HCT116 (cell line): ENCODE measurements at regions of chr1 and their contacts with region 1.

Region 1: DNA sequence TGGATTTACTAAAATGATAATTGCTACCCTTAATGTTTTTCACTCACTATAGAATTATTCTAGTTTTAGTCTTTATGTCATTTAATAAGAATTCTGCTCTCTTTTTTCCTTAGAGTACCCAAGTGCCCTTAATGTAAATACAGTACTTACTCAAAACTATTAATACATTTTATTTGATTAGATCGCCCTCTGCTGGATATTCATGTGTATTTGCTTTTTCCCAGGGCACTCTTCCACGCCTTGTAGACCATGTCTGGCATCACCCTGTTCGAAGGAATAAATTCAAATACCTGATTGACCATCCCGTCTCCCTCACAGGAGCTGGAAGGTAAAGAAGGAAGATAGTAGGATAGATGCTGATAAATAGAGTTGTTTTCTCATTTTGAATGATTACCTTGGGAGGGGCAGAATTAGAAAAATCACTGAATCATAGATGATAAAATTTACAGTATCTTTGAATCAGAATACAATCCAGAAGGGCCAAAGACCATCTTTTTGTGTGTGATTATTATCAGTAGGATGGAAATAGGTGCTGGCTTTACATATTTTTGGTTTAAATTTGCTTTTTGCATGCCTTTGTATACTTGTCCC is 4.1 kb downstream of the AXDND1 start:
- DNase-seq: peak; percentile 57
- ATAC-seq: peak; percentile 67
- H3K4me3 ChIP-seq: no peak overlapping the region
- H3K27ac ChIP-seq: no peak overlapping the region
- H3K4me1 ChIP-seq: peaks cover 0 to 13% of the 10 kb centered on the region in 2 experiments; a peak in 2 of 4 replicates
- H3K27me3 ChIP-seq: no peaks in the 10 kb centered on the region
- CTCF ChIP-seq: peak; percentile 39 to 82 (median 77); a peak in 4 of 6 replicates
- POLR2A ChIP-seq: no peak
- RAD21 ChIP-seq: peak; percentile 87

Region 2: GRCh38 chr1:178542560-178543356 is 827.1 kb before region 1 on chr1:
- CTCF ChIA-PET with region 1: no interaction called
- POLR2A ChIA-PET with region 1: no interaction called
- RAD21 ChIA-PET with region 1: no interaction called
- intact Hi-C with region 1: loop called (anchors 2 kb)
- DNase-seq: peak; percentile 43
- ATAC-seq: peak; percentile 88
- H3K4me3 ChIP-seq: peak overlapping the region; percentile 61 to 69
- H3K27ac ChIP-seq: peak overlapping the region; percentile 64
- H3K4me1 ChIP-seq: peaks cover 17 to 33% of the 10 kb centered on the region in 2 experiments
- H3K27me3 ChIP-seq: no peaks in the 10 kb centered on the region
- CTCF ChIP-seq: peak; percentile 84 to 98 (median 88)
- POLR2A ChIP-seq: no peak
- RAD21 ChIP-seq: peak; percentile 85

Region 3: DNA sequence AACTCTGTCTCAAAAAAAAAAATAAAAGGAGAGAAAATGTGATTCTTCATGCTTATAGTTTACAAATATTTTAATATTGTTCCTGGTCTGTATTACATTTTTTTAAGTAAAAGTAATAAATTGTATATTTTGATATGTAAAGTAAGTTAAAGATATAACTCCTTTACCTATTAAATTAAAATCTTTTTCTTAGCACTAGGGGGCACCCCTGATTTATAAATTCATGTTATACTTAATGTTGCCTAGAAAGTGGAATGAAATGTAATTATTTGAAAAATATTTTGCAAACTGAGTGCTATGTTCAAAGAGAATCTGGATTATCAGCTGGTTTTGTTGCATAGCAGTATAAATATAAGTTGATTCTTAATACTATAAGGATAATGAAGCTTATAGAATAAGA is 595.6 kb before region 1 on chr1:
- CTCF ChIA-PET with region 1: no interaction called
- POLR2A ChIA-PET with region 1: no interaction called
- RAD21 ChIA-PET with region 1: no interaction called
- intact Hi-C with region 1: loop called (anchors 2 kb)
- DNase-seq: no peak
- ATAC-seq: no peak
- H3K4me3 ChIP-seq: no peak overlapping the region
- H3K27ac ChIP-seq: no peak overlapping the region
- H3K4me1 ChIP-seq: no peaks in the 10 kb centered on the region
- H3K27me3 ChIP-seq: no peaks in the 10 kb centered on the region
- CTCF ChIP-seq: peak; percentile 7 to 62 (median 47); a peak in 3 of 6 replicates
- POLR2A ChIP-seq: no peak
- RAD21 ChIP-seq: peak; percentile 73

Region 4: DNA sequence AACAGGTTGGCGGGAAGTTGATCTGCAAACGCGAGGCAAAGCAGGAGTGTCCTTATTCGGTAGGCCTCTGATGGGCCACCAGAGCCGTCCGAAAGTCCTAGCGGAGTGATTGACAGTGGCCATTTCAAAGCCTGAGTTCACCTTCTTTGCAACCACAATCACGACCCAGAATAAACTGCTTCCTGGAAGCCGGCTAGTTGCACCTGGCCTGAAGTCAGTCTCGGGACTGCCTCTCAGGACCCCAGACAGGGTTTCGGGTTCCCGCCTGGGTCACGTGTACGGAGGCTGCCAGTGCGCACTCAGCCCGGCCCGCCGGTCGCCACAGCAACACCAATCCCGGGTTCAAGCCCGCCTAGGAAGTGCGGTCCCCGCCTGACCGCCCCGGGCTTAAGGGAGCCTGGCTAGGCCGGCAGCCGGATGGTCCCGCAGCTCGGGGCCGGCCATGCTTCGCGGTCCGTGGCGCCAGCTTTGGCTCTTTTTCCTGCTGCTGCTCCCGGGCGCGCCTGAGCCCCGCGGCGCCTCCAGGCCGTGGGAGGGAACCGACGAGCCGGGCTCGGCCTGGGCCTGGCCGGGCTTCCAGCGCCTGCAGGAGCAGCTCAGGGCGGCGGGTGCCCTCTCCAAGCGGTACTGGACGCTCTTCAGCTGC is 288.0 kb before region 1 on chr1 and contains the start of gene TOR3A:
- CTCF ChIA-PET with region 1: interaction called, 3 read pairs
- POLR2A ChIA-PET with region 1: no interaction called
- RAD21 ChIA-PET with region 1: no interaction called
- intact Hi-C with region 1: loop called (anchors 1 kb)
- DNase-seq: peak; percentile 68
- ATAC-seq: peak; percentile 92
- H3K4me3 ChIP-seq: peak within 1 kb of the TSS; percentile 73 to 82
- H3K27ac ChIP-seq: peak within 1 kb of the TSS; percentile 74
- H3K4me1 ChIP-seq: peaks cover 0 to 23% of the 10 kb centered on the region in 2 experiments; a peak in 3 of 4 replicates
- H3K27me3 ChIP-seq: no peaks in the 10 kb centered on the region
- CTCF ChIP-seq: no peak
- POLR2A ChIP-seq: no peak
- RAD21 ChIP-seq: no peak
- total RNA-seq, gene TOR3A: 27.0 TPM

Region 5: GRCh38 chr1:179121159-179121938 is 248.5 kb before region 1 on chr1:
- CTCF ChIA-PET with region 1: interaction called, 12 read pairs
- POLR2A ChIA-PET with region 1: no interaction called
- RAD21 ChIA-PET with region 1: no interaction called
- intact Hi-C with region 1: loop called (anchors 2 kb)
- DNase-seq: peak; percentile 28
- ATAC-seq: peak; percentile 61; the same call in 1 of the 2 replicates
- H3K4me3 ChIP-seq: no peak overlapping the region
- H3K27ac ChIP-seq: no peak overlapping the region
- H3K4me1 ChIP-seq: peaks cover 0 to 13% of the 10 kb centered on the region in 2 experiments; a peak in 1 of 4 replicates
- H3K27me3 ChIP-seq: no peaks in the 10 kb centered on the region
- CTCF ChIP-seq: peak; percentile 61 to 70 (median 66); a peak in 5 of 6 replicates
- POLR2A ChIP-seq: no peak
- RAD21 ChIP-seq: peak; percentile 84

Region 6: GRCh38 chr1:179251675-179252074 is 118.2 kb before region 1 on chr1:
- CTCF ChIA-PET with region 1: interaction called, 12 read pairs
- POLR2A ChIA-PET with region 1: no interaction called
- RAD21 ChIA-PET with region 1: interaction called in 1 of 2 experiments, 3 read pairs
- intact Hi-C with region 1: loop called (anchors 1 kb)
- DNase-seq: no peak
- ATAC-seq: peak; percentile 79
- H3K4me3 ChIP-seq: no peak overlapping the region
- H3K27ac ChIP-seq: no peak overlapping the region
- H3K4me1 ChIP-seq: no peaks in the 10 kb centered on the region
- H3K27me3 ChIP-seq: no peaks in the 10 kb centered on the region
- CTCF ChIP-seq: peak; percentile 28 to 51 (median 41); a peak in 4 of 6 replicates
- POLR2A ChIP-seq: no peak
- RAD21 ChIP-seq: peak; percentile 80